Transverse colon (tissue), 4 donors: ENCODE measurements at regions of chr12 and their contacts with region 1.

Region 1: DNA sequence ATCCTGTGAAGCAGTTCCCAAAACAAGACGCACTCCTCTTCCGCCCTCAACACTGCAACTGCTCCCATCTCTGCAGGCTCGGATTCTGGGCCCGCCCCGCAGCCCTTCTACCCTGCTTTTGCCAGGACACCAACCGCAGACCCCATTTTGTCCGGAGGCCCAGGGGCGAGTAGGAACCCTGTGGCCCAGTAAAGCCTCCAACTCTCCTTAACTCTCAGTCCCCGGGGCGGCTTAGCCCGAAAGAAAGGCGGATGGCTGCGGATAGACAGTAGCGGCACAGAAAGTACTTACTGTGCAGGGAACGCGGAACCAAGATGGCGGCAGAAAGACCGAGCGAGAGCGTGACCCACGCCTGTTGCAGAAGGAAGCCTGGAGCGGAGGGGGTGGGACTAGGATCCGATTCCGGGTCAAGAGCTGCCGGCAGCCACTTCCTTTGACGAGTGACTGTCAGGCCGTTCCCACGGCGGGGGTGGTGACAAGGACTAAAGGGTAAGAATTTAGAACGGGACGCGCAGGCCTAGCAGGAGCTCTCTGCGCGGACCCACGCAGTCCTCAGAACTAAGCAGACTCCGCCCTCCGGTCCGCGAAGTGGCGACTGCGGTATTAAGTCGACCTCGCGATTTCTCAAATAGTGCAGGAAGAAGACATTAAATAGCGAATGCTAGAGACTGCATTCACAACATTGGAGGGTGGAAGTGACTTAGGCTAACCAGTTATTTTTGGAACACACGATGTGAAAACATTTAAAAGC is at the start of gene NACA:
- DNase-seq: peak; percentile 99
- H3K4me3 ChIP-seq: peak within 1 kb of the TSS; percentile 65 to 83 (median 68)
- H3K27ac ChIP-seq: peak within 1 kb of the TSS; percentile 90 to 91 (median 91)
- H3K4me1 ChIP-seq: peaks cover 22 to 46% (median 41%) of the 10 kb centered on the region in 4 donors
- H3K27me3 ChIP-seq: no peaks in the 10 kb centered on the region
- CTCF ChIP-seq: no peak
- EP300 ChIP-seq: no peak
- POLR2A ChIP-seq: peak; percentile 98
- total RNA-seq, gene NACA: 187 to 1,049 (median 756) TPM

Region 2: DNA sequence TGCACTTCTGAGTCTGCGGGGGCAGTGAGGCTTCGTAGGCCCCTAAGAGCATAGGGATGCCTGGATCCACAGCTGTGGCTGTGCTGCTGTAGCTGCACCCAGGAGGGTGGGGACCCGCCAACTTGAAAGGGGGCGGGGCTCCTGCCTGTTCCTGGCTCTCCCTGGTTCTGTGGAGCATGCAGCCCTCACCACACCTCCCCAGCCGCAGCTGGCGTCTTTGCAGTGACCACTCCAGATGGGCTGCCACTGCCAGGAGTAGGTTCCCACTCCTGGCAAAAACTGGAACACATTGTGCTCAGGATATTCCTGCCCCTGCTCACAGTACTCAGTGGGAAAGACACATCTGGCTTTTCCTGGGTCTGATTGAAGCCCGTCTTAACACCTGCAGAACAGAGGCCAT is 311.8 kb before region 1 on chr12:
- in situ Hi-C with region 1: no loop called
- intact Hi-C with region 1: no loop called
- DNase-seq: no peak
- H3K4me3 ChIP-seq: no peak overlapping the region
- H3K27ac ChIP-seq: no peak overlapping the region
- H3K4me1 ChIP-seq: no peaks in the 10 kb centered on the region
- H3K27me3 ChIP-seq: no peaks in the 10 kb centered on the region
- CTCF ChIP-seq: no peak
- EP300 ChIP-seq: no peak
- POLR2A ChIP-seq: no peak

Region 3: GRCh38 chr12:56468216-56469006 is 256.7 kb before region 1 on chr12 and contains the start of gene SPRYD4:
- in situ Hi-C with region 1: no loop called
- intact Hi-C with region 1: no loop called
- DNase-seq: peak; percentile 94
- H3K4me3 ChIP-seq: peak within 1 kb of the TSS; percentile 55 to 96 (median 65)
- H3K27ac ChIP-seq: peak within 1 kb of the TSS; percentile 86 to 92 (median 88)
- H3K4me1 ChIP-seq: peaks cover 7 to 17% (median 12%) of the 10 kb centered on the region in 4 donors
- H3K27me3 ChIP-seq: no peaks in the 10 kb centered on the region
- CTCF ChIP-seq: peak in 1 of 5 experiments; percentile 30
- EP300 ChIP-seq: no peak
- POLR2A ChIP-seq: peak; percentile 86
- total RNA-seq, gene SPRYD4: 3.0 to 11.5 (median 3.9) TPM

Region 4: GRCh38 chr12:56636675-56637540 is 88.2 kb before region 1 on chr12:
- in situ Hi-C with region 1: no loop called
- intact Hi-C with region 1: loop called (anchors 10 kb)
- DNase-seq: peak; percentile 100
- H3K4me3 ChIP-seq: peak overlapping the region; percentile 15 to 96 (median 81)
- H3K27ac ChIP-seq: peak overlapping the region; percentile 95 to 99 (median 96)
- H3K4me1 ChIP-seq: peaks cover 26 to 56% (median 43%) of the 10 kb centered on the region in 4 donors
- H3K27me3 ChIP-seq: no peaks in the 10 kb centered on the region
- CTCF ChIP-seq: peak; percentile 50 to 74 (median 54)
- EP300 ChIP-seq: no peak
- POLR2A ChIP-seq: peak; percentile 26

Region 5: DNA sequence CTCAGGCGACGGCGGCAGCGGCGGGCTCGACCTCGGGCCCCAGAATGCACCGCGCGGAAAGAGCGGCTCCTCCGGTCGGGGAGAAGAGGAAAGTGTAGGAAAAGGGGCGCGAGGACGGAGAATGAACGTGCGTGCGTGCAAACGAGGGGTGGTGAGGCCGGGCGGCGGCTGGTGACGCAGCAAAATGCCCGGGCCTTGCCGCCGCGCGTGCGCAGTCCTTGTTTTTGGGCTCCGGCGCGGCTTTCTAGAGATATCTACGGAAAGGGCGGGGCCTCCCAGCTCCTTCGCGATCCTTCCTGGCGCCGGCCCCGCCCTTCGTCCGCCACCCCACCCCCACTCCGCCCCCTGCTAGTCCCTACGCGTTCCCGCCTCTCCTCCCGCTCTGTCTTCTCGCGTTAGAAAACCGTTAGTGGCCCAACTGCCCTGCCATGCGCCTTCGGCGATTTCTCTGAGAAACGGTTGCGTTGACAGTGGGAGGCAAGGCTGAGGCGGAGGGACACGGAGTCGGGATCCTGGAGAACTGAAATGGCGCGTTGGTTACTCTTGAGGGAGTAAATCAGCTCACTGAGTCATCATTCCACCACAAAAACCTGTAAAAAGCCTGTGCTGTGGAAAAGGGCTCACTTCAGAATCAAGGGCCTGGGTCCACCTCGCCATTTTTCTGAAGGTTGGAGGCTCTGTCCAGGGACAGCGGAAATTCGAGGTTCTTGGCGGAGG is 36.9 kb before region 1 on chr12 and contains the start of gene PTGES3:
- in situ Hi-C with region 1: no loop called
- intact Hi-C with region 1: loop called (anchors 2 kb)
- DNase-seq: peak; percentile 98
- H3K4me3 ChIP-seq: peak within 1 kb of the TSS; percentile 64 to 93 (median 86)
- H3K27ac ChIP-seq: peak within 1 kb of the TSS; percentile 100
- H3K4me1 ChIP-seq: peaks cover 0 to 43% (median 28%) of the 10 kb centered on the region in 4 donors
- H3K27me3 ChIP-seq: no peaks in the 10 kb centered on the region
- CTCF ChIP-seq: no peak
- EP300 ChIP-seq: no peak
- POLR2A ChIP-seq: peak; percentile 97
- total RNA-seq, gene PTGES3: 40.4 to 168 (median 102) TPM